HCT116 (cell line): ENCODE measurements at regions of chr1 and their contacts with region 1.

Region 1: DNA sequence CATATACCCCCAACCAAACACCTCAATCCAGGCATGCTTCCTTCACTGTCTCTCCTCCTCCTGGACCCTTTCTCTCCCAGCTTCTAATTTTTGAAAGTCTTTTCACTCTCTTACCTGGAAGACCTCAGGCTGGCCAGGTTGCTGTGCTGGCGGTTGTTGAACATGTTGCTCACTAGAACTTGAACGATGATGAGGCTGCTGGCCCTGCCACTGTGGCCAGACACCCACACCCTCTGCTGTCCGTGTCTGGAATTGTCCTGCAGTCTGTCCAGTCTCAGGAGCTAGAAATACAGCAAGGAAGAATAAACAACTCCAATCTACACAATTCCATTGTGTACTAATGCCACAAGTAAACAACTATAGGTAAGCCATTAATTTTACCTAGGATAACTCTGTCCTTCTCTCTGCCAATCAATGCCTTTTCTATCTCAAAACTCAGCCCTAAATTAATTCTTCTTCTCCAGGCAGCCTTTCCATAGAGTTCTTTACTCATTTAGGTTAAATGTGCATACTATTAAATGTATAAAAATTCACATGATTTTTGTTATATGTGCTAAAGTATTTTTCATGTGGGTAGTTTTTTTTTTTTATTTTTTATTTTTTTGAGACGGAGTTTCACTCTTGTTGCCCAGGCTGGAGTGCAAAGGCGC is 5.1 kb upstream of the CTSK start:
- DNase-seq: peak; percentile 16
- ATAC-seq: peak; percentile 95
- H3K4me3 ChIP-seq: no peak overlapping the region
- H3K27ac ChIP-seq: no peak overlapping the region
- H3K4me1 ChIP-seq: no peaks in the 10 kb centered on the region
- H3K27me3 ChIP-seq: no peaks in the 10 kb centered on the region
- CTCF ChIP-seq: peak; percentile 62 to 80 (median 78); a peak in 5 of 6 replicates
- POLR2A ChIP-seq: no peak
- RAD21 ChIP-seq: peak; percentile 90

Region 2: DNA sequence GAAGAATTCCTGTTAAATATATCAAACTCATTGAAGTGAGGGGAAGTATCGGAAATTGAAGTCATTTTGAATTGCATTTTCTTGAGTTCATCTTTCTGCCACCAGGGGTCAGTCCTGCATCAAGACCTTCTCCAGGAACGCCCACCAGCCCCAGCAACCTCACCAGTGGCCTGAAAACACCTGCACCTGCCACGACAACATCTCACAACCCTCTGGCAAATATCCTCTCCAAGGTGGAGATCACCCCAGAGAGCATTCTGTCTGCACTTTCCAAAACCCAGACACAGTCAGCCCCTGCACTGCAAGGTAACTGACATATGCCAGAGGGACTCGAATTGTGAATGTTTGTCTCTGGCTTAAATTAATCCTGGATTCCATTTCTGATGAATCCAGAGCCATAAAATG is 348.8 kb before region 1 on chr1:
- CTCF ChIA-PET with region 1: interaction called, 3 read pairs
- POLR2A ChIA-PET with region 1: no interaction called
- RAD21 ChIA-PET with region 1: no interaction called
- intact Hi-C with region 1: loop called (anchors 10 kb)
- DNase-seq: peak; percentile 41
- ATAC-seq: peak; percentile 81
- H3K4me3 ChIP-seq: no peak overlapping the region
- H3K27ac ChIP-seq: no peak overlapping the region
- H3K4me1 ChIP-seq: no peaks in the 10 kb centered on the region
- H3K27me3 ChIP-seq: no peaks in the 10 kb centered on the region
- CTCF ChIP-seq: peak; percentile 64 to 79 (median 67)
- POLR2A ChIP-seq: no peak
- RAD21 ChIP-seq: peak; percentile 83

Region 3: GRCh38 chr1:150841626-150842025 is 28.4 kb after region 1 on chr1:
- CTCF ChIA-PET with region 1: no interaction called
- POLR2A ChIA-PET with region 1: no interaction called
- RAD21 ChIA-PET with region 1: no interaction called
- intact Hi-C with region 1: no loop called
- DNase-seq: no peak
- ATAC-seq: no peak
- H3K4me3 ChIP-seq: no peak overlapping the region
- H3K27ac ChIP-seq: no peak overlapping the region
- H3K4me1 ChIP-seq: no peaks in the 10 kb centered on the region
- H3K27me3 ChIP-seq: no peaks in the 10 kb centered on the region
- CTCF ChIP-seq: no peak
- POLR2A ChIP-seq: no peak
- RAD21 ChIP-seq: no peak

Region 4: DNA sequence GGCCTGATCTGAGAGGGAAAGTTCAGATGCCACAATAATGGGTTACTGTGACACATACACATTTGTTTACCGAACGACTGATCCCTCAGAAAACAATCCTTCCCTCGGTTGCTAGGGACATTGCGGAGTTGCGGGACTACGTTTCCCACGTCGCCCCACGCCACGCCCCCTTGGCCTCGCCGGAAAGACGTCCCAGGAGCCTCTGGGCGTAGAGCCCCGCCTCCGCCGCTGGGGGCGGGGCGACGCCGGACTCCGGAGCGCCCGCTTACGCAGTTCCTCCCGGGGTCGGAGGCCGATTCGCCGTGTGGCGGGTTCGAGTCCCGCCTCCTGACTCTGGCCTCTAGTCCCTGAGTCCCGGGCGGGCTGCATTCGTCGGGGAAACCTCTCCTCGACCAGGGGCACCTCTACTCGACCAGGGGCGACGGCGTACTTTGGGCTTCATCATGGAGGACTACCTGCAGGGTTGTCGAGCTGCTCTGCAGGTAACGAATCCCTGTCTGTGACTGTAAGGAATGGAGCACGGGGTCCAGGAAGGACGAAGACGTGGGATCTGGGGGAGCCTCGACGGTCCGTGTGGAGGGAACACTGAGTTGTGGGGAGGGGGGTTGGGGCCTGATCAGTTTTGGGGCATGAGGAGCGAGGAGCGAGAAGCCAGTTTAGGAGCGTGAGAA is 195.1 kb after region 1 on chr1 and contains the start of gene PRUNE1:
- CTCF ChIA-PET with region 1: no interaction called
- POLR2A ChIA-PET with region 1: no interaction called
- RAD21 ChIA-PET with region 1: no interaction called
- intact Hi-C with region 1: no loop called
- DNase-seq: peak; percentile 94
- ATAC-seq: peak; percentile 92
- H3K4me3 ChIP-seq: peak within 1 kb of the TSS; percentile 60 to 94
- H3K27ac ChIP-seq: peak within 1 kb of the TSS; percentile 75
- H3K4me1 ChIP-seq: peaks cover 13 to 40% of the 10 kb centered on the region in 2 experiments; a peak in 3 of 4 replicates
- H3K27me3 ChIP-seq: no peaks in the 10 kb centered on the region
- CTCF ChIP-seq: no peak
- POLR2A ChIP-seq: peak; percentile 58
- RAD21 ChIP-seq: no peak
- total RNA-seq, gene PRUNE1: 20.2 TPM